HepG2 (cell line): ENCODE measurements at regions of chr5 and their contacts with region 1.

Region 1: DNA sequence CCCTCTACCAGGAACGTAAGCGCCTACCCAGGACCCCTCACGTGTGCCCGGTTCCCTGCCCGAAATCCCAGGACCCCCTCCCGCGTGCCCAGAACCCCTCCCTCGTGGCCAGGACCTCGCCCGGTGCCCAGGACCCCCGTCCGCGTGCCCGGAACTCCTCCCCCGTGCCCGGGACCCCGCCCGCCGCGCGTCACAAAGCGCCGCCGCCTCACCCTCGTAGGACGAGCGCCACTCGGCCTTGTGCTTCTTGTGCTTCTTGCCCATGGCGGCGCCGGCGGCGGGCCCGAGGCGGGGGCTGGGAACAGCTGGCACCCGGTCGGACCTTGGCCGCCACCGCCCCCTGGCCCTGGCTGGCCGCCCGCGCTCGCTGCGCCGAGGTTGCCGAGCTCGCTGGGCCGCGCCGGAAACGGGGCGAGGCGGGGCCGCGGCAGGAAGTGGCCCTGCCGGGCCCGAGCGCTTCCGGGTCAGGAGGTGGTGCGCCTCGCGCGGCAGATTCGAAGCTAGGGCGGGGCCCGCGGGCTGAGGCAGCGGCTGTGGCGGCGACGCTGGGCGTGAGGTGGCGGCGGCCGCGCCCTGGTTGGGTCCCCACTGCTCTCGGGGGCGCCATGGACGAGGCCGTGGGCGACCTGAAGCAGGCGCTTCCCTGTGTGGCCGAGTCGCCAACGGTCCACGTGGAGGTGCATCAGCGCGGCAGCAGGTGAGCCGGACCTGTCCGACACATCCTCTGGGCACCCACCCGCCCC is at the starts of genes BRD9 and TRIP13:
- DNase-seq: peak; percentile 66
- ATAC-seq: peak; percentile 90
- H3K4me3 ChIP-seq: peak within 1 kb of the TSS; percentile 70 to 90 (median 83)
- H3K27ac ChIP-seq: peak within 1 kb of the TSS; percentile 79
- H3K4me1 ChIP-seq: peaks cover 39% of the 10 kb centered on the region
- H3K27me3 ChIP-seq: no peaks in the 10 kb centered on the region
- CTCF ChIP-seq: peak; percentile 18; the same call in 1 of the 2 replicates
- EP300 ChIP-seq: peak in 1 of 2 experiments; percentile 28; a peak in 2 of 4 replicates
- POLR2A ChIP-seq: peak in 1 of 2 experiments; percentile 53; a peak in 1 of 4 replicates
- RAD21 ChIP-seq: peak; percentile 72
- total RNA-seq, gene BRD9: 20.7 and 22.9 TPM in 2 replicates
- total RNA-seq, gene TRIP13: 33.0 and 39.5 TPM in 2 replicates

Region 2: GRCh38 chr5:671459-672328 is 220.9 kb before region 1 on chr5:
- CTCF ChIA-PET with region 1: no interaction called
- POLR2A ChIA-PET with region 1: no interaction called
- in situ Hi-C with region 1: loop called (anchors 10 kb)
- intact Hi-C with region 1: loop called (anchors 10 kb)
- DNase-seq: peak; percentile 57
- ATAC-seq: peak; percentile 76
- H3K4me3 ChIP-seq: peak overlapping the region; percentile 28 to 64 (median 47); a peak in 4 of 6 replicates
- H3K27ac ChIP-seq: peak overlapping the region; percentile 43
- H3K4me1 ChIP-seq: peaks cover 45% of the 10 kb centered on the region
- H3K27me3 ChIP-seq: peaks cover 3 to 19% of the 10 kb centered on the region in 2 experiments; a peak in 4 of 5 replicates
- CTCF ChIP-seq: peak; percentile 96
- EP300 ChIP-seq: no peak; a peak in 1 of 4 replicates
- POLR2A ChIP-seq: 0 out of 4 replicates have a peak, but pooled peaks of 1 of the 2 experiments have one; percentile 25
- RAD21 ChIP-seq: peak; percentile 90

Region 3: GRCh38 chr5:849651-850301 is 42.8 kb before region 1 on chr5:
- CTCF ChIA-PET with region 1: no interaction called
- POLR2A ChIA-PET with region 1: no interaction called
- in situ Hi-C with region 1: no loop called
- intact Hi-C with region 1: loop called (anchors 5 kb)
- DNase-seq: peak; percentile 92
- ATAC-seq: peak; percentile 86
- H3K4me3 ChIP-seq: peak overlapping the region; percentile 31 to 71 (median 43); a peak in 5 of 6 replicates
- H3K27ac ChIP-seq: peak overlapping the region; percentile 37
- H3K4me1 ChIP-seq: peaks cover 39% of the 10 kb centered on the region
- H3K27me3 ChIP-seq: peaks cover 1 to 17% of the 10 kb centered on the region in 2 experiments; a peak in 3 of 5 replicates
- CTCF ChIP-seq: no peak
- EP300 ChIP-seq: peak in 1 of 2 experiments; percentile 37; a peak in 1 of 4 replicates
- POLR2A ChIP-seq: peak in 1 of 2 experiments; percentile 79; a peak in 2 of 4 replicates
- RAD21 ChIP-seq: no peak

Region 4: GRCh38 chr5:873328-873727 is 19.2 kb before region 1 on chr5:
- CTCF ChIA-PET with region 1: no interaction called
- POLR2A ChIA-PET with region 1: no interaction called
- in situ Hi-C with region 1: no loop called
- intact Hi-C with region 1: no loop called
- DNase-seq: no peak
- ATAC-seq: no peak
- H3K4me3 ChIP-seq: no peak overlapping the region
- H3K27ac ChIP-seq: no peak overlapping the region
- H3K4me1 ChIP-seq: no peaks in the 10 kb centered on the region
- H3K27me3 ChIP-seq: no peaks in the 10 kb centered on the region
- CTCF ChIP-seq: no peak
- EP300 ChIP-seq: no peak
- POLR2A ChIP-seq: no peak
- RAD21 ChIP-seq: no peak